HEK293T (cell line): ENCODE measurements at regions of chr4 and their contacts with region 1.

Region 1: GRCh38 chr4:40840985-40841571 is 91.3 kb downstream of the NSUN7 start:
- DNase-seq: peak; percentile 73

Region 2: GRCh38 chr4:40685300-40685699 is 155.8 kb before region 1 on chr4:
- CTCF ChIA-PET with region 1: no interaction called
- POLR2A ChIA-PET with region 1: no interaction called
- DNase-seq: no peak

Region 3: DNA sequence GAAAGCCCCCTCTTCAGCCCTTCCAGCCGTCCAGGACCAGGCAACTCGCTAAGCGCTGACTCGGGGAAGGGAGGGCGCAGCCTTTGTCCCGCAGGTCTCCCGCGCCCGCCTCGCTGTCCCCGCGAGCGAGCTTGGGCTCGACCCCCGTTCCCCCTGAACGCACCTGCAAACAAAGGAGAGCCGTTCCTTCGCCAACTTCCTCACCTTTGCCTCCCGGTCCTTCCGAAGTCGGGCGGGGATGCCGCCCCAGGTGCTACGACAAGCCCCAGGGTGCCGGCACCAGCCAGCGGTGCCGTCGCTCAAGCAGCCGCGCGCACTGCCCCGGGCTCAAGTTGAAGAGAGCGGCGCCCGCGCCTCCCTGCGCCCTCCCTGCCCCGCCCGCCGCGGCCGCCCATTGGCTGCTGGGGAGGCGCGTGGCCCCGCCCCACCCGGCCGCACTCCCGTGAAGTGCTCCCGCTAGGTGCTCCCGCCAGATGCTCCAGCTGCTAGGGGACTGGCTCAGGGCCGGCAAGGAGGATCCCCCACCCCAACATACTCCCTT is 15.8 kb after region 1 on chr4:
- CTCF ChIA-PET with region 1: interaction called, 10 read pairs
- POLR2A ChIA-PET with region 1: no interaction called
- DNase-seq: peak; percentile 81

Region 4: GRCh38 chr4:40897557-40898203 is 56.6 kb after region 1 on chr4:
- CTCF ChIA-PET with region 1: interaction called, 10 read pairs
- POLR2A ChIA-PET with region 1: interaction called, 3 read pairs
- DNase-seq: peak; percentile 79

Region 5: DNA sequence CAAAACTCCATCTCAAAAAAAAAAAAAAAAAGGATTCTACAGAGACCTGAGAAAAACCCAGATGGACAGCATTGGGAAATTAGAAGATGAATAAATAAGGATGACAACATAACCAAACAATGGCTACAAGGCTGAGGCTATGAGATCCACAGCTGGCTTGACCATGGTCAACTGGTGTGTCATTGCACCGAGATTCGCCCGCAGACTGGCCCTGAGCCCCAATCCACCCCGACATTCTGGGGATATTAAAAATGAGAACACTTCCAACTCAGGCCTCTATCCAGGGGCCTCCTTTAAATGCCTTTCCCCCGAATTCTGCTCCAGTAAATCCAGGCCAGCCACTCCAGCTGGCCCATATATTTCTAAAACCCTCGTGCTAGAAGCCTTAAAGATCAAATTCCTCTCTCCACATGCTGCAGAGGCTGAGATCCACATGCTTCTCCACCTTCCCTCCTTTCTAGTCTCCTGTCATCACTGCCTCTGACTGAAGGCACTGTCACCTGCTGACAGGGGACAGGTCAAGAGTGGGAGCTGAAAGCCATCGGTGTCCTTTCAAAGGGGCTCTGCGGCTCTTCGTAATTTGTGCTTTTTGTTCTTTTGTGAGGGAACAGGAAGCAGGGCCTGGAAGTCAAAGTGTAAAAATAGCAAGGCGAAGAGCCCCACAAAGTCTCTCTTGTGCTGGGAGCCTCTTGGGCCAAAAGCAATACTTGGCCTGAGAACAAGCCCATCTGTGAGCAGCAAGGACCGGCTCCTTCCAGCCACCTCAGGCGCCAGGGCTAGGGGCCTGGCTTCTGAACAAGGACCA is 112.4 kb after region 1 on chr4:
- CTCF ChIA-PET with region 1: no interaction called
- POLR2A ChIA-PET with region 1: no interaction called
- DNase-seq: no peak